Lower leg skin (tissue), 4 donors: ENCODE measurements at regions of chr10 and their contacts with region 1.

Region 1: GRCh38 chr10:67858971-67859370 is 21.0 kb upstream of the DNAJC12 start:
- DNase-seq: no peak
- H3K4me3 ChIP-seq: no peak overlapping the region
- CTCF ChIP-seq: no peak
- POLR2A ChIP-seq: no peak

Region 2: DNA sequence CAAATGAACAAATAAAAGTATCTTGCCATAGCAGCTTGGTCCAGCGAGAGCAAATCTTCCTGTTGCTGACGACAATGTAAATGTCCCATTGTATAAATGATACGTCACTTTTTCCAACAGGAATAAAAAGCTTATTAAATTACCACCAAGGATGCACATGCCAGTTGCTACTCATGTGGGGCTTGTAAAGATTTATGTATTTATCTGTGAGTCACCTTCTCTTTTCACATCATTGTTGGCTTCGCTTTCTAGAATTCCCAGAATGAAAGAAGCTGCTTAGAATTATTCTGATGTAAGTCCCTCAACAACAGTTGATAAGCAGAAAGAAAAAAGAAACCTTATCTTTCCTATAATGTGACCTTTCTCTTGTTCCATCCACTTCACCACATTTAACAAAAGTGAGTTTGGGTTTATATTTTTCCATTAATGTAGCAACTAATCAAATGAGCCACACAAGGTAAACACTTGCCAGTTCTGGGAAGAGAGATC is 43.4 kb before region 1 on chr10:
- intact Hi-C with region 1: no loop called
- DNase-seq: no peak
- H3K4me3 ChIP-seq: no peak overlapping the region
- CTCF ChIP-seq: no peak
- POLR2A ChIP-seq: no peak

Region 3: DNA sequence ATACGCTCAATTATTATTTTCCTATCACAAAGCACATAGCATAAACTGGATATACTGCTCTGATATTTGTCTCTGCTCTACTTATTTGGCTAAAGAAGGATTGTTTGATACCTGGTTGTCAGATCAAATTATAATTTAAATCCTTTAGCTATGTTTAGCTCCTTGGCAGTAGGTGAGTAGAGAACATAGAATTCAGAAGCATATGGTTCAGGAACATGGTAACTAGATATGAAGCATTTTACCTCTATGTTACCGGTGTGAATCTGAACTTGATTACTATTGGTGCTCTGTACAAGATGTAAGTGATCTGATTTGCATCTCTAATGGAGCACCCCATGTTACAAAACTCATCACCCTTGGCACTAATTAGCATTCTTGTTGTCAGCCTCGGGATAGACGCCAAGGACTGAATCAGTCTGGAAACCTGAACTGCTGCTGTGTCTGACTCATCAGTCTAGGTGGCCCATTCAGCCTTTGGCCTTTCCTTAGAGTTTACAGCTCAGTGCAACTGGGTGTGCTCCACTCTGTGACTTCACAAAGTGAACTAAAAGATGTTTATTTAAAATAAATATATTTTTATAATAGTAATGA is 238.0 kb after region 1 on chr10:
- intact Hi-C with region 1: no loop called
- DNase-seq: peak in 1 of 2 donors; percentile 68
- H3K4me3 ChIP-seq: no peak overlapping the region
- CTCF ChIP-seq: no peak
- POLR2A ChIP-seq: no peak

Region 4: DNA sequence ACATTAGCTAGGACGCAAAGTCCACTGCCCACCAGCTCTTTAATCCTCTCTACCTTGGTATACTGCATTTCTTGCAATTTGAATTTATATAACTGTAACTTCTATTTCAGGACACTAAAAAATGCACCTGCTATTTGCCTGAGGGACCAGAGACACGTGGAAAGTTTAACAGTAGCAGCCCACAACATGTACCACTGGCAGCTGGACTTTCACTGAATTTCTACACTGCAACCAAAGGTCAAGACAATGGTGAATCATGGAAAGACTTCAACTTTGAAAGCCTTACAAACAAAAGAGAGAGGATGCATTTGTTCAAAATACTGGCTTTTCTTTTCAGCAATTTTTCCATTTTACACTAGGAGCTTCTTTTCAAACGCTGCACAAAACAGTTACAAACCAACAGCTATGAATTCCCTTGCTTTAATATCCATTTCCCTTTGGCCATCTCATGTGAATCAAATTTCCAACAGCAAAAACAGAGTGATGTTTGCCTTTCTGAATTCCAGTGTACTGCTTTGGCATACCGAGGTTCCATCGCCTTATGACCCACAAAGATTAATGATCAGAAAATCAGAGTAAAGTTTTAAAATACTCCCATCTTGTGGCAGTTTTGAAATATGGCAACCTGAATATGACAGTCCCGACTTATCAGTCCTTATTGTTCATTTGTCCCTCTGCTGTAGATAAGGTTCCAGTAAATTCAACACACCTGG is 443.0 kb after region 1 on chr10:
- intact Hi-C with region 1: loop called (anchors 5 kb)
- DNase-seq: peak in 1 of 2 donors; percentile 2
- H3K4me3 ChIP-seq: no peak overlapping the region
- CTCF ChIP-seq: no peak
- POLR2A ChIP-seq: no peak